KBM-7 (cell line): ENCODE measurements at regions of chr2 and their contacts with region 1.

Region 1: DNA sequence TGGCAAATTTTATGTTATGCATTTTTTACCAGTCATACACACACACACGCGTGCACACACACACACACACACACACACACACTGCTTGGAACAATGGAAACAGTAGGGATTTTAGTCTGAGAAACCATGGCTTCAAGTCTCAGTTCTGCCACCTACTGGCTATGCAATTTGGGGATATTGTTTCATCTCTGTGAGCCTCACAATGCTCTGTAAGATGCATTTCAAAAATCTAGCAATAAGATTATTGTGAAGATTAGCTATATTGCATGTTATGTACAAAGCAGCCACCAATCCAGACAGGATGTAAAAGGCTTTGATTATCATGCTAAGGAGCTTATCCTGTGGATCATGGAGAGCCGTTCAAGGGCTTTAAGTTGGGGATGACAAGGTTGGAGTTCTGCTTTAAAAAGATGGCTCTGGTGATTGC is 401.4 kb downstream of the NBAS start:
- DNase-seq: peak; percentile 75

Region 2: GRCh38 chr2:14501061-14501460 is 658.7 kb before region 1 on chr2:
- in situ Hi-C with region 1: no loop called
- DNase-seq: no peak

Region 3: DNA sequence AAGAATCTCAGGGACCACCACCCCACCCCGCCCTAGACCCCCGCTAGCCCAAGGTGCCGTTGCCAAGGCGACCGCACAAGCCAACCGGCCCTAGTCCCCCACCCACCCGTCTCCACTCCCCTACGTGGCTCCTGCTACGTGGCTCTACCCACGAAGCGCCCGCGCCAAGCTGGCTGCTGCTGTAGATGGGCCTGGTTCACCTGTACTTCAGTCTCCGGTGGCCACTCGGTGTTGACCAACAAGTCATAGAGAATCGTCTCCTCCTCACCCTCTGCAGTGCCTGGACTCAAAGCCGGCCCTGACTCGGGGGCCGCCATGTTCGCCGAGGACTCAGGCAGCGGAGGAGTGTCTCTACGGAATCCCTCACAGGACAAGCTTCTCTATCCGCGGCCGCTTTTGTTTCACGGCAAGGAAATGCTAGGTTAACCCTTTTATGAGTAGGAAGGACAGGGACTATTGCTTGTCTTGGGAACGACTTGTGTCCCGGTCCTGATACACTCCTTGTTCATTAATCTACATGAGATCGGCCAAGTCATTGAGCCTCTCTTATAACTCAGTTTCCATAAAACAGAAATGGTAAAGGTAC is 401.3 kb after region 1 on chr2 and contains the start of gene NBAS:
- in situ Hi-C with region 1: loop called (anchors 25 kb)
- DNase-seq: peak; percentile 85